Activated T-helper 1 cell treated with anti-CD3 and anti-CD28 coated beads, Interleukin-12 subunit alpha, Interleukin-12 subunit beta, Interleukin-2, Interleukin-4 antibody, amounts not matched to agents 30 ng/mL and 10 ng/mL and 1 ng/mL, durations not matched to agents 14 hours and 24 hours and 36 hours (primary cell): ENCODE measurements at regions of chr2 and their contacts with region 1.

Region 1: DNA sequence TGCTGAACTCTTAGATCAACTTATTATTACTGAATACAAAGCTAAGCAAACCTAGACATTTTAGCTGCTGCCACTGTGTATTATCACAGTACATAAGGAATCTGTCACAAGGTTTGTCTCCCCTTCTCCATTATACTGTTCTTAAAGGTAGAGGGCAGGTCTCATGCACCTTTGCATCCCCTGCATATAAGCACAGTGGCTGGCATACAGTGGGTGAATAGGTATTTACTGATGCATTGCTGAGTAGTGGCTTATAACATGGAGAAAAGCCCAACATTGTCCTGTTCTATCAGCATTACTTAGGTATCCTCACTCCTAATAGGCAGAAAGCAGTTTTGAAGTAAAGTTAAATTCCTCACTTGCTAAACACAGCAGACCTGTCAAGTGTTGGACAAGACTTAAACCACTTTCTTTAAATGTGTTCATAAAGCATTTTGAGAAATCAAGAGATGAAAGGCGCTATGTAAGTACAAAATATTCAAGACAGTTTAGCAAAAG is 43.6 kb downstream of the SF3B1 start:
- DNase-seq: no peak
- H3K4me3 Mint-ChIP-seq: no peak overlapping the region
- H3K27ac Mint-ChIP-seq: no peak overlapping the region
- H3K4me1 Mint-ChIP-seq: no peaks in the 10 kb centered on the region
- H3K27me3 Mint-ChIP-seq: peaks cover 1% of the 10 kb centered on the region

Region 2: DNA sequence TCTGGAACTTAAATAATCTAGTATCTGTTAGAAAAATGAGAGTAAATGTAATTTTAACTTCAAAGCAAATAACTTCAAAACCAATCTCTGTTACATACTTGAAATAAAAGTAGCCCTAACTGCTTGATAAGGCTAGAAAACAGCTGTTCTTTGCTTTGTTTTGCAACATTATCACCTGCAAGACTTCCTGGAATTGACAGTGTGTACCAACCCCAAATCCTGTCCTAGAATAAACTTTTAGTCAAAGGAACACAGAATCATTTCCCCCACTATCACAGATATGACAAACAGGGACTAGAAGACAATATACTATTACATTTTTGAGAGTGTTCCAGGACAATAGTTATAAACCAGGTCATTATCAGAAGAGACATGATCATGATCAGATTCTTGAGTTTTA is 359.5 kb before region 1 on chr2:
- intact Hi-C with region 1: loop called (anchors 5 kb)
- DNase-seq: no peak
- H3K4me3 Mint-ChIP-seq: no peak overlapping the region
- H3K27ac Mint-ChIP-seq: peak overlapping the region; percentile 29
- H3K4me1 Mint-ChIP-seq: peaks cover 58% of the 10 kb centered on the region
- H3K27me3 Mint-ChIP-seq: no peaks in the 10 kb centered on the region

Region 3: DNA sequence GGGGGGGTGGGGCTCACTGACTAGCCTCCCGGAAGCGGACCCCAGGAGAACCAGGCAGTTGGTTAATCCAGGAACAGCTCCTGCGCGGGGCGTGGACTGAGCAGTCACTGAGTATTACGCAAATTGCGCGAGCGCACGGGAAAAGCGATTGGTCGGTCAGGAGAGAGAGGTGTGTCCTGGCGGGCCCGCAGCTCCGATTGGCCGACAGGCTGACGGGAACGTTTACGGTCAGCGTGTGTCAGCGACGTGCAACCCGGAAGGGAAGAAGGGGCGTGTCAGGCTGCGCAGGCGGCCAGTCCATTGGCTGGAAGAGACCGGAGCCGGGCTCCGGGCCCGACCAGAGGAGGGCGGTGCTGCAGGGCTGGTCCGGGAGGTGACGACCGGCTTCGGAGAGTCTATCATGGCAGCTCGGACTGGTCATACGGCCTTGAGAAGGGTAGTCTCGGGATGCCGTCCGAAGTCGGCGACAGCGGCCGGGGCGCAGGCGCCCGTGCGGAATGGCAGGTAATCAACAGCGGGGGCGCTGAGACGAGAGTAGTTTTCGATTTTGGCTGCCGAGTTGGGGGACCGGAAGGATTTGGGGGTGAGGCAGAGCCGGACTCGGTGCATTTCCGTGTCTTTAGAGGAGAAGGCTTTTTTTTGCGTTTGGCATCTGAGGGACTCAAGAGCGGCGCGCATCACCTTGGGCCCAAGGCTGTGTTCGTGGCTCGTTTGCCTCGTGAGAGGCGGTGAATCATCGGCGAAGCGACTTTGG is 62.1 kb after region 1 on chr2 and contains the start of gene COQ10B:
- intact Hi-C with region 1: no loop called
- DNase-seq: peak; percentile 99
- H3K4me3 Mint-ChIP-seq: peak within 1 kb of the TSS; percentile 99
- H3K27ac Mint-ChIP-seq: peak within 1 kb of the TSS; percentile 100
- H3K4me1 Mint-ChIP-seq: peaks cover 40% of the 10 kb centered on the region
- H3K27me3 Mint-ChIP-seq: no peaks in the 10 kb centered on the region
- total RNA-seq, gene COQ10B: 26.9 and 28.8 TPM in 2 replicates

Region 4: DNA sequence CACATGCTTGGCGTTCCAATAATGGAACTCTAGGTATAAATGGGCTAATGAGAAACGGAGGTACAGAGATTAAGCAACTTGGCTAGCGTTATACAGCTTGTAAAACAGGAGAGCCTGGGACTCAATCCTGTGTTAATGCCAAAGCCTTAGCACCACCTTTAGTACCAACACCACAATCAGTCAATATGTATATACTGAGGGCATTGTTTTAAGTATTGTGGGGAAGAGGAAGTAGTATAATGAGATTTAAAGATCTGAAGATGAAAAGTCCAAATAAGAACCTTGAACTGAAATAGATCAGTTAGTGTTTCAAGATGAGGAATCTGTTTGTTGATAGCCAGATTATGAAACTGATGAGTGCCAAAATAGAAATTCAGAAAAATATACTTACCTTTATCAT is 322.0 kb after region 1 on chr2:
- intact Hi-C with region 1: no loop called
- DNase-seq: no peak
- H3K4me3 Mint-ChIP-seq: no peak overlapping the region
- H3K27ac Mint-ChIP-seq: no peak overlapping the region
- H3K4me1 Mint-ChIP-seq: peaks cover 30% of the 10 kb centered on the region
- H3K27me3 Mint-ChIP-seq: no peaks in the 10 kb centered on the region